Psoas muscle (tissue), 8 donors: ENCODE measurements at regions of chr14 and their contacts with region 1.

Region 1: DNA sequence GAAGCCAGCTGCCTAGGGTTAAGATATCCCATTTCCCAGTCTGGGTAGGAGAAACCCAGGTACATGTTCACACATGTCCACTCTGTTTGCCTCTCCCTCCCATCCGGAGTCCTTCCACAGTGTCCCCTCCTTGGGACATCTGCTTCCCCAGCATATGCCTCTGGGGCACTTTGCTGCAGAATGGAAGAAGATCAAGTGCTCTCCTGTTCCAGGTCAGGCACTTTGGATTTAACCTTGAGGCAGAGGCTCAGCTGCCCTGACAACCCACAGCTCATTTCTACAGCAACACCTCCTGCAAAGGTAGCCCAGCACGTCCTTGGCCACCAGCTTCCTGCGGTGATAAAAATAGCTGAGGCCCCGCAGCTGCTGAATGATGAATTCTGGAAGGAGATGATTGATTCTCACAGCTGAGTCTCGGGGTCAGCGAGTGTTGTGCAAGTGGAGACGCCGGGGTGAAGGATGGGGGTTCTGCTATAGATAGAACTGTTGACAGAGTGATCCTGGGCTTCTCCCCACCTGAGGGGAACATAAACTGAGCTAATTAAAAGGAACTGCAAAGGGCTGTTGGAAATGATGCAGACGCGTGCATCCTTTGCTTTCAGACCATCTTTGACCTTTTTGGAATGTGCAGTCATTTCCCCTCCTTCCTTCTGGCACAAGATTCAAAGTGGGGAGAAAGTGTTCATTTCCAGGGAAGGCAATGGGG is 145.0 kb downstream of the SLC38A6 start:
- DNase-seq: peak; percentile 75 to 89
- ATAC-seq: peak; percentile 71 to 77 (median 74)
- H3K4me3 ChIP-seq: peak overlapping the region; percentile 37
- H3K27ac ChIP-seq: peak overlapping the region; percentile 97
- H3K4me1 ChIP-seq: peaks cover 57% of the 10 kb centered on the region
- H3K27me3 ChIP-seq: no peaks in the 10 kb centered on the region
- CTCF ChIP-seq: no peak

Region 2: GRCh38 chr14:60970146-60970545 is 155.9 kb before region 1 on chr14:
- intact Hi-C with region 1: no loop called
- DNase-seq: no peak
- ATAC-seq: peak in 1 of 4 donors; percentile 38
- H3K4me3 ChIP-seq: no peak overlapping the region
- H3K27ac ChIP-seq: peak overlapping the region; percentile 20
- H3K4me1 ChIP-seq: peaks cover 54% of the 10 kb centered on the region
- H3K27me3 ChIP-seq: no peaks in the 10 kb centered on the region
- CTCF ChIP-seq: no peak

Region 3: DNA sequence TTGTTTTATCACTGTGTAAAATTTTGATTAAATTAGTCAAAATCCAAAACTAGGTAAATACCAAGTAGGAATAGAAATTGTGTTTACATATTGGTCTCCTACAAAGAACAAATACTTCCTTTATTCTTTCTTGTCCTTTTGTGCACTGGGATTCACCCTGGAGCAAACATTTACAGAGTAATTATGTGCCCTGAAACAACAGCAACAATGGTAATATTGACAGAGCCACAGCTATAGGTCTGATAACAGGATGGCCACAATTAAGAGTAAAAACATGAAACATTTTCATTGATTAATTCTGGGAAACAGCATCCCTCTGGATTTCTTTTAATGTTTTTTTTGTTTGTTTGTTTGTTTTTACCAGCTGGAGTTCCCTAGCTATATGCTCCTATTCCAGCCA is 83.8 kb before region 1 on chr14:
- intact Hi-C with region 1: no loop called
- DNase-seq: no peak
- ATAC-seq: no peak
- H3K4me3 ChIP-seq: no peak overlapping the region
- H3K27ac ChIP-seq: no peak overlapping the region
- H3K4me1 ChIP-seq: no peaks in the 10 kb centered on the region
- H3K27me3 ChIP-seq: no peaks in the 10 kb centered on the region
- CTCF ChIP-seq: no peak

Region 4: GRCh38 chr14:61147831-61148549 is 22.0 kb after region 1 on chr14:
- intact Hi-C with region 1: loop called in 1 of 2 experiments (anchors 2 kb)
- DNase-seq: peak; percentile 79 to 82
- ATAC-seq: peak; percentile 72 to 85 (median 80)
- H3K4me3 ChIP-seq: peak overlapping the region; percentile 23
- H3K27ac ChIP-seq: peak overlapping the region; percentile 98
- H3K4me1 ChIP-seq: peaks cover 30% of the 10 kb centered on the region
- H3K27me3 ChIP-seq: no peaks in the 10 kb centered on the region
- CTCF ChIP-seq: no peak

Region 5: GRCh38 chr14:61203081-61203753 is 77.2 kb after region 1 on chr14:
- intact Hi-C with region 1: loop called in 1 of 2 experiments (anchors 5 kb)
- DNase-seq: no peak
- ATAC-seq: peak; percentile 88 to 95 (median 92)
- H3K4me3 ChIP-seq: peak overlapping the region; percentile 45
- H3K27ac ChIP-seq: peak overlapping the region; percentile 92
- H3K4me1 ChIP-seq: peaks cover 25% of the 10 kb centered on the region
- H3K27me3 ChIP-seq: no peaks in the 10 kb centered on the region
- CTCF ChIP-seq: no peak